Activated CD4-positive, alpha-beta memory T cell treated with anti-CD3 and anti-CD28 coated beads, Interleukin-2, amount 10 ng/mL, durations not matched to agents 7 days and 5 days (primary cell): ENCODE measurements at regions of chr22 and their contacts with region 1.

Region 1: GRCh38 chr22:44684506-44685383 is 17.3 kb upstream of the PRR5 start:
- DNase-seq: peak; percentile 91
- H3K4me3 Mint-ChIP-seq: peak overlapping the region; percentile 33
- H3K27ac Mint-ChIP-seq: peak overlapping the region; percentile 83
- H3K4me1 Mint-ChIP-seq: peaks cover 60% of the 10 kb centered on the region
- H3K27me3 Mint-ChIP-seq: peaks cover 3% of the 10 kb centered on the region

Region 2: DNA sequence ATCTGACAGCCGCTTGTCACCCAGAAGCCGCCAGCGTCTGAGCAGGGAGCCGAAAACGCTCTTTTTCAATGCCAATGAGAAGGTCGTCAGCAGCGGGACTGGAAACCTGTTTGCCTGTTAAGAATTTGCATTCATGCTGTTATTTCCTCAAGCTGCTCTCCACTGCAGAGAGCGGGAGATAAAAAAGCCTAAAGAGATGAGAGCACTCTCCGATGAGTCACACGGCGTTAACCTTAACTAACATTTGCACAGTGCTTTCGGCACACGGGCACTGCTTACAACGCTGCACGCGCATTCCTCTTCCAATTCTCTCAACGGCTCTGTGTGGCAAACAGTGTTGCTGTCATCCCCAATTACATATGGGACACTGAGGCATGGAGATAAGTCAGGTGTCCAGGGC is 146.7 kb before region 1 on chr22:
- CTCF ChIA-PET with region 1: no interaction called
- POLR2A ChIA-PET with region 1: no interaction called
- DNase-seq: no peak
- H3K4me3 Mint-ChIP-seq: no peak overlapping the region
- H3K27ac Mint-ChIP-seq: no peak overlapping the region
- H3K4me1 Mint-ChIP-seq: no peaks in the 10 kb centered on the region
- H3K27me3 Mint-ChIP-seq: peaks cover 10% of the 10 kb centered on the region

Region 3: GRCh38 chr22:44625981-44626687 is 58.6 kb before region 1 on chr22:
- CTCF ChIA-PET with region 1: interaction called, 20 read pairs
- POLR2A ChIA-PET with region 1: interaction called, 3 read pairs
- DNase-seq: peak; percentile 83
- H3K4me3 Mint-ChIP-seq: no peak overlapping the region
- H3K27ac Mint-ChIP-seq: no peak overlapping the region
- H3K4me1 Mint-ChIP-seq: peaks cover 5% of the 10 kb centered on the region
- H3K27me3 Mint-ChIP-seq: peaks cover 2% of the 10 kb centered on the region

Region 4: GRCh38 chr22:44664149-44664548 is 20.6 kb before region 1 on chr22:
- CTCF ChIA-PET with region 1: interaction called, 146 read pairs
- POLR2A ChIA-PET with region 1: interaction called, 92 read pairs
- DNase-seq: peak; percentile 83
- H3K4me3 Mint-ChIP-seq: no peak overlapping the region
- H3K27ac Mint-ChIP-seq: peak overlapping the region; percentile 71
- H3K4me1 Mint-ChIP-seq: peaks cover 48% of the 10 kb centered on the region
- H3K27me3 Mint-ChIP-seq: peaks cover 3% of the 10 kb centered on the region